Activated CD4-positive, alpha-beta memory T cell treated with anti-CD3 and anti-CD28 coated beads, Interleukin-2, amount 10 ng/mL, durations not matched to agents 7 days and 5 days (primary cell): ENCODE measurements at regions of chr17 and their contacts with region 1.

Region 1: GRCh38 chr17:42997984-42998938 is at the start of gene RPL27:
- DNase-seq: peak; percentile 98
- H3K4me3 Mint-ChIP-seq: peak within 1 kb of the TSS; percentile 94
- H3K27ac Mint-ChIP-seq: peak within 1 kb of the TSS; percentile 96
- H3K4me1 Mint-ChIP-seq: peaks cover 35% of the 10 kb centered on the region
- H3K27me3 Mint-ChIP-seq: no peaks in the 10 kb centered on the region
- total RNA-seq, gene RPL27: 880 to 892 TPM

Region 2: DNA sequence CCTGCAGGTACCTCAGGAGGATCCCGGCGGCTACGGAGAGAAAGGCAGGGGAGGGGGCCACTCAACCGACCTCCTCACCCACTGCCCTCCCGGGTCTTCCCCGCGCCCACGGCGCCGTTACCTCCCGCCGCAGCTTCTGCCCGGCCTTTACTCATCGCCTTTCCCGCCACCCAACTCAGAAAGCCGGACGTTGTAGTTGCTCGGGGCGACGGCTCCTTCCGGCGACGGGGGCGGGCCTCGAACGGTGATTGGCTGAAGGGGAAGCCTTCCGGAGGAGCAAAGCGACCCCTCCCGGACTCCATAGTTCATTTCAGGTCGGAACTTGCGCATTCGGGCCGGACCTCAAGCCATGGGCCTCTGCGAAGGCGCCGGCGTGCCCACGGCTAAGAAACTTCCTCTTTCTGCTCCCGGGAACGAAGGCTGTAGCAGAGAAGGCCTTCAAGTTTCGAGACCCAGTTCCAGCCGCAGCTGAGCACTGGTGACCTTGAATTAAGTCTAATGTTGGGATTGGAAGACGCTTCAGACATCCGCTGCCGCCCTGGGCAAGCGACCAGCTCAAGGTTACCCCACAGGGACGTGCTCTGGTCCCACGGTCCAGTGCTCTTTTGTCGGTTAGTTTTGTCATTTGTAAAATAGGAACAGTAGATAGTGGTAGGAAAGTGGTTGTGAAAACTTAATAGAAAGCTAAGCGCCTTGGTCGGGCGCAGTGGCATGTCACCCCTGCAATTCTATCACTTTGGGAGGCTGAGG is 420.6 kb before region 1 on chr17 and contains the start of gene PSMC3IP:
- CTCF ChIA-PET with region 1: interaction called, 16 read pairs
- POLR2A ChIA-PET with region 1: interaction called, 4 read pairs
- DNase-seq: peak; percentile 95
- H3K4me3 Mint-ChIP-seq: peak within 1 kb of the TSS; percentile 96
- H3K27ac Mint-ChIP-seq: peak within 1 kb of the TSS; percentile 88
- H3K4me1 Mint-ChIP-seq: peaks cover 48% of the 10 kb centered on the region
- H3K27me3 Mint-ChIP-seq: no peaks in the 10 kb centered on the region
- total RNA-seq, gene PSMC3IP: 14.7 to 16.1 TPM

Region 3: DNA sequence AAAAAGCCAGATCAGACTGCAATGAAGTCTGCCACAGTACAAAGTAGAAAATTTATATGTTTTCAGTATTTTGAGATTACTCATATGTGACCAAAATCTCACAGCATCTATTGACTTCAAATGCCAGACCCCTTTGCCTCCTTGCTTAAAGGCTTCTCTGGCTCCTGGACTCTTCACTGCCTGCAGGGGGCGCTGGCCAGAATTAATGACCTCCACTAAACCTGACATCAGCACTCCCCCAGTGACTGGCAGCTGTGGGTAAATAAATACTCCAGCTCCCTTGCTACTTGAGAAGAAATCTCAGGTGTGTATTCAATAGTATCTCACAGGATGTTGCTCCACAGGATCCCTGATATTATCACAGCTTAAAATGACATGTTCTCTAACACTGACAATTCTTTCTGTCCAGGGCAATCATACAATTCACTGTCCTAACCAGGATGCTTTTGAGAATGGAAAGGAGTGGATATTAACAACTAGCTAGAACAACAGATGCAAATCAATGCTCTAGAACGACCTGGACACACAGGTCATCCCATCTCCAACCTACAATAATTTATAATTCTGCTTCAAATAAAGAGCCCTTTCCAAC is 178.2 kb before region 1 on chr17:
- CTCF ChIA-PET with region 1: interaction called, 22 read pairs
- POLR2A ChIA-PET with region 1: interaction called, 17 read pairs
- DNase-seq: peak; percentile 74
- H3K4me3 Mint-ChIP-seq: no peak overlapping the region
- H3K27ac Mint-ChIP-seq: no peak overlapping the region
- H3K4me1 Mint-ChIP-seq: peaks cover 36% of the 10 kb centered on the region
- H3K27me3 Mint-ChIP-seq: no peaks in the 10 kb centered on the region

Region 4: DNA sequence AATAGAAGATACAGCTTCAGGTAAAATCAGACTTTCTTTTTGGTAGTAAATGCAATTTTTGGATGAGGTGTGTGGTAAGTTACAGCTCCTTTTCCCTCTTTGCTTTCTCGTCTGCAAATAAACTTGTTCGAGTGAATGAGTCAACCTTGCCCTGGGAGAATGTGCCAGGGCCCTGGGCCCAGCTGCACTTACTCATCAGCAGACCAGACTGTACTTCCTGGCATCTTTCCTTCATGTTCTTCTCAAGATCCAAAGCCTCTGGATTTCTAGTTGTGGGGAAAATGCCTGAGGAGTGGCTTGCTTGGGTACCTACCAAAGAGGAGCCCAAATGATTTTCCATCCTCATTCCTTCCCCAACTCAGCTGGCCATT is 103.1 kb before region 1 on chr17:
- CTCF ChIA-PET with region 1: no interaction called
- POLR2A ChIA-PET with region 1: no interaction called
- DNase-seq: no peak
- H3K4me3 Mint-ChIP-seq: no peak overlapping the region
- H3K27ac Mint-ChIP-seq: no peak overlapping the region
- H3K4me1 Mint-ChIP-seq: peaks cover 3% of the 10 kb centered on the region
- H3K27me3 Mint-ChIP-seq: peaks cover 26% of the 10 kb centered on the region

Region 5: GRCh38 chr17:42980398-42981397 is 17.6 kb before region 1 on chr17 and contains the start of gene RUNDC1:
- CTCF ChIA-PET with region 1: interaction called, 9 read pairs
- POLR2A ChIA-PET with region 1: interaction called, 18 read pairs
- DNase-seq: peak; percentile 91
- H3K4me3 Mint-ChIP-seq: peak within 1 kb of the TSS; percentile 98
- H3K27ac Mint-ChIP-seq: peak within 1 kb of the TSS; percentile 87
- H3K4me1 Mint-ChIP-seq: peaks cover 40% of the 10 kb centered on the region
- H3K27me3 Mint-ChIP-seq: no peaks in the 10 kb centered on the region
- total RNA-seq, gene RUNDC1: 17.1 to 17.3 TPM

Region 6: DNA sequence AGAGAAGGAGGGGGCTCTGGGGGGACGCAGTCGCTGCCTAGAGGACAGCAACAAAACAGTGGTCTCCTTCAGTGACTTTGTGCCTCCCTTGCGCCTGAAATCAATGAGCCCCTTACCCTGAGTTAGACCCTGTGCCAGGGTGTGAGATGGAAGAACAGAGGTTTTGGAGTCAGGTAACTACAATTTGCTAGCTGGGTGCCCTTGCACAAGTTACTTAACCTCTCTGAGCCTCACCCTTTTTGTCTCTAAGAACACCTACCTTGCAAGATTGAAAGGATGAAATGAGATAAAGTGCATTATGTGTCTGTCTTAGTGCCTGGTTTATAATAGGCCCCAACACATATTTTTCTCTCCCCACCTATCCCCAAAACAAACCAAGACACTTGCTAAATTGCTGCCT is 36.6 kb after region 1 on chr17:
- CTCF ChIA-PET with region 1: no interaction called
- POLR2A ChIA-PET with region 1: no interaction called
- DNase-seq: no peak
- H3K4me3 Mint-ChIP-seq: no peak overlapping the region
- H3K27ac Mint-ChIP-seq: no peak overlapping the region
- H3K4me1 Mint-ChIP-seq: no peaks in the 10 kb centered on the region
- H3K27me3 Mint-ChIP-seq: no peaks in the 10 kb centered on the region

Region 7: GRCh38 chr17:43140396-43141332 is 142.4 kb after region 1 on chr17:
- CTCF ChIA-PET with region 1: no interaction called
- POLR2A ChIA-PET with region 1: no interaction called
- DNase-seq: no peak
- H3K4me3 Mint-ChIP-seq: no peak overlapping the region
- H3K27ac Mint-ChIP-seq: no peak overlapping the region
- H3K4me1 Mint-ChIP-seq: peaks cover 10% of the 10 kb centered on the region
- H3K27me3 Mint-ChIP-seq: no peaks in the 10 kb centered on the region

Region 8: DNA sequence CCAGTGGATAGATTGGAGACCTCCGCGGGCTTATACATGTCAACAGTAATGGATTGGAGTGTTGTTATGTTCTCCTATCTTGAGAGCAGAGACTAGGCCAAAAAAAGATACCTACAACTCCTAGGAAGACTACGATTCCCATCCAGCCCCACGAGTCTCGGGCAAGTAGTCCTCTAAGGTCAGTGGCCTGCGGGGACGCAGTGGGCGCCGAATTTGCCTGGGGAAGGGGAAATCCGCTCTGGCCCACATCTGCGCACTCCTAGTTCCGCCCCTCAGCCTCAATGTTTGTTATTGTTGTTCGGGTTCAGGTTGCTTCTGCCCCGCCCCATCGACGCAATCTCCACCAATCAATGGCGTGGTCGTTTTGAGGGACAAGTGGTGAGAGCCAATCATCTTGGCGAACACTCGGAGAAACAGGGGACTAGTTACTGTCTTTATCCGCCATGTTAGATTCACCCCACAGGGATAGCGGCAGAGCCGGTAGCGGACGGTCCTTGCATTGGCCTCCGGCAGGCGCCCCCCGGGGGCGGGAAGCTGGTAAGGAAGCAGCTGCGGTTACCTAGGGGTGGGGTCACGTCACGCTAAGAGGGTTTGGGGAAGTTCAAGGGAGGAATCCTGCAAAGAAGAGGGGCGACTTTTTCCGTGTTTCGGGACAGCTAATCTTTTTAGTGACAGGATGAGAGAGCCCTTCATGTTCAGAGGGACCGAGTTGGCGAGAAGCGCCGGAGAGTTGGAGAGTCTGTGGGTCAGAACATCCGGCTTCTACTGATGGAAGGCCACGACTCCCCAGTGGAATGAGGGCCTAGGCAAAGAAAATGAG is 172.7 kb after region 1 on chr17 and contains the start of gene NBR1:
- CTCF ChIA-PET with region 1: no interaction called
- POLR2A ChIA-PET with region 1: interaction called, 15 read pairs
- DNase-seq: peak; percentile 98
- H3K4me3 Mint-ChIP-seq: no peak within 1 kb of the TSS
- H3K27ac Mint-ChIP-seq: no peak within 1 kb of the TSS
- H3K4me1 Mint-ChIP-seq: peaks cover 39% of the 10 kb centered on the region
- H3K27me3 Mint-ChIP-seq: no peaks in the 10 kb centered on the region
- total RNA-seq, gene NBR1: 68.1 to 69.8 TPM

Region 9: GRCh38 chr17:43360739-43361505 is 362.7 kb after region 1 on chr17:
- CTCF ChIA-PET with region 1: no interaction called
- POLR2A ChIA-PET with region 1: interaction called, 25 read pairs
- DNase-seq: peak; percentile 94
- H3K4me3 Mint-ChIP-seq: peak overlapping the region; percentile 85
- H3K27ac Mint-ChIP-seq: peak overlapping the region; percentile 99
- H3K4me1 Mint-ChIP-seq: peaks cover 41% of the 10 kb centered on the region
- H3K27me3 Mint-ChIP-seq: peaks cover 3% of the 10 kb centered on the region